CD14-positive monocyte (primary cell): ENCODE measurements at regions of chr9 and their contacts with region 1.

Region 1: GRCh38 chr9:99595796-99596195 is 225.9 kb upstream of the NR4A3 start:
- DNase-seq: peak; percentile 90 to 96 (median 92)
- H3K4me3 ChIP-seq: no peak overlapping the region
- H3K4me3 Mint-ChIP-seq: peak overlapping the region in 1 of 2 donors; percentile 33
- H3K27ac ChIP-seq: peak overlapping the region in 1 of 2 donors; percentile 80
- H3K27ac Mint-ChIP-seq: peak overlapping the region; percentile 87 to 97 (median 92)
- H3K4me1 ChIP-seq: peaks cover 36 to 42% of the 10 kb centered on the region in 2 donors
- H3K4me1 Mint-ChIP-seq: peaks cover 41% of the 10 kb centered on the region
- H3K27me3 ChIP-seq: no peaks in the 10 kb centered on the region
- H3K27me3 Mint-ChIP-seq: peaks cover 0 to 5% (median 2%) of the 10 kb centered on the region in 3 donors
- CTCF ChIP-seq: no peak

Region 2: GRCh38 chr9:99433555-99433954 is 162.2 kb before region 1 on chr9:
- intact Hi-C with region 1: loop called (anchors 5 to 10 kb)
- DNase-seq: peak; percentile 93 to 98 (median 93)
- H3K4me3 ChIP-seq: no peak overlapping the region
- H3K4me3 Mint-ChIP-seq: no peak overlapping the region
- H3K27ac ChIP-seq: peak overlapping the region in 1 of 2 donors; percentile 67
- H3K27ac Mint-ChIP-seq: peak overlapping the region; percentile 47 to 92 (median 81)
- H3K4me1 ChIP-seq: peaks cover 13% of the 10 kb centered on the region in 2 donors
- H3K4me1 Mint-ChIP-seq: peaks cover 18% of the 10 kb centered on the region
- H3K27me3 ChIP-seq: no peaks in the 10 kb centered on the region
- H3K27me3 Mint-ChIP-seq: peaks cover 0 to 2% (median 0%) of the 10 kb centered on the region in 3 donors
- CTCF ChIP-seq: no peak

Region 3: DNA sequence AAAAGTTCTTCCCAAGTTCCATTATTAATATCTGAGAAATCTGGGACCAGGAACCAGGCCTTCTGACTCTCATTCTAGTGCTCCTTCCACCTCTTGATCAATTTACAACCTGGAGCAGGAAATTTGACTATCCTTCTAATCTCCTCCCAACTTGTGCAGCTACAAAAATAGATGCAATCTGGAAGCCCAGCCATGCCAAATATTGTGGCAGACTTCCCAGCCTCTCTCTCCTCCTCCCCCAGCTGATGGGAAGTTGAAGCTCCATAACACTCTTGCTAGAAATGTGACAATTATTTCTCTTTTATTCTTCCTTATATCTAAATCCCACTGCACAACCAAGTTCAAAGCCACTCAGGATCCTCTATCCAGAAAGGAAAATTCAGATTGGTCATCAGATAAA is 121.6 kb before region 1 on chr9:
- intact Hi-C with region 1: no loop called
- DNase-seq: no peak
- H3K4me3 ChIP-seq: no peak overlapping the region
- H3K4me3 Mint-ChIP-seq: no peak overlapping the region
- H3K27ac ChIP-seq: no peak overlapping the region
- H3K27ac Mint-ChIP-seq: no peak overlapping the region
- H3K4me1 ChIP-seq: no peaks in the 10 kb centered on the region
- H3K4me1 Mint-ChIP-seq: no peaks in the 10 kb centered on the region
- H3K27me3 ChIP-seq: no peaks in the 10 kb centered on the region
- H3K27me3 Mint-ChIP-seq: peaks cover 0 to 3% (median 2%) of the 10 kb centered on the region in 3 donors
- CTCF ChIP-seq: no peak

Region 4: GRCh38 chr9:99579964-99580363 is 15.8 kb before region 1 on chr9:
- intact Hi-C with region 1: loop called in 1 of 2 experiments (anchors 2 kb)
- DNase-seq: peak; percentile 66 to 86 (median 80)
- H3K4me3 ChIP-seq: peak overlapping the region in 1 of 3 experiments; percentile 28
- H3K4me3 Mint-ChIP-seq: no peak overlapping the region
- H3K27ac ChIP-seq: peak overlapping the region; percentile 4 to 76
- H3K27ac Mint-ChIP-seq: peak overlapping the region; percentile 82 to 91 (median 89)
- H3K4me1 ChIP-seq: peaks cover 32 to 35% of the 10 kb centered on the region in 2 donors
- H3K4me1 Mint-ChIP-seq: peaks cover 48% of the 10 kb centered on the region
- H3K27me3 ChIP-seq: no peaks in the 10 kb centered on the region
- H3K27me3 Mint-ChIP-seq: peaks cover 0 to 3% (median 0%) of the 10 kb centered on the region in 3 donors
- CTCF ChIP-seq: no peak